PC-9 (cell line): ENCODE measurements at regions of chr11 and their contacts with region 1.

Region 1: GRCh38 chr11:126115816-126116331 is 53.2 kb upstream of the CDON start:
- DNase-seq: peak; percentile 43 to 75
- H3K4me3 ChIP-seq: no peak overlapping the region
- H3K27ac ChIP-seq: no peak overlapping the region
- H3K4me1 ChIP-seq: peaks cover 34% of the 10 kb centered on the region
- H3K27me3 ChIP-seq: no peaks in the 10 kb centered on the region
- CTCF ChIP-seq: no peak; the same call in 1 of the 2 replicates

Region 2: DNA sequence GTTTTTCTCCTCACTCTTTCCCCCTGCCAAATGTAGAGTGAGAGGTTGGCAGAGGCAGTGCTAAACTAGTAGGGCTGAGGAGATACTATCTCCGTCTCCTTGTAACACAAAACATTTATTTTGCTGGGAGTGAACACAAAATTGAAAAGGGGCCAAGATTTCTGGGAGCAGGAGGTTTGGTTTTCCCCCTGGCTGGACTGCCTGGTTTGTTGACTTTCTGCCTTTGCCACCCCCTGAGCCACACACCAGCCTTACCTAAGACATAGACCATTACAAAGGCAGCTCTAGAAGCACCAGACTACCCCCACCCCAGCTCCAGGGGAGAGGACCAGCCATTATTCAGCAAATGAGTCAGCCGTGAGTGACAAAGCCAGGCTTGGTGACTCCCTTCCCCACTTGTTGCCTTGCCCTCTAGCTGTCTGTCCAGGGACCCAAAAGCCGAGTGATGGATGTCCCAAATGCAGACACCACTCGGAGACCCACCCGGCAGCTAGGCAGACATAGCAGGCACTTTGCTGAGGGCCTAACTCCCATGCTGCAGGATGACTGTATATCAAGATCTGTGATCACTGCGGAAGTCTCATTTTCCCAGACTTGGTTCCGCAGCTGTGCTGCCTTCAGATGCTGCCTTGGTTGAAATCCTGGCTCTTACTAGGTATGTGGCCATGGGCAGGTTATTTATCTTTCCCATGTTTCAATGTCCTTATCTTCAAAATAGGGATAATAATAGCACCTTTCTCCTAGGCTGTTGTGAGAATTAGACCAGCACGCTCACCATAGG is 35.5 kb before region 1 on chr11:
- CTCF ChIA-PET with region 1: no interaction called
- POLR2A ChIA-PET with region 1: no interaction called
- intact Hi-C with region 1: loop called (anchors 5 kb)
- DNase-seq: peak; percentile 77 to 82
- H3K4me3 ChIP-seq: peak overlapping the region; percentile 27; the same call in 1 of the 2 replicates
- H3K27ac ChIP-seq: peak overlapping the region; percentile 78
- H3K4me1 ChIP-seq: peaks cover 32% of the 10 kb centered on the region
- H3K27me3 ChIP-seq: no peaks in the 10 kb centered on the region
- CTCF ChIP-seq: no peak

Region 3: GRCh38 chr11:126164781-126165180 is 48.9 kb after region 1 on chr11:
- CTCF ChIA-PET with region 1: interaction called, 4 read pairs
- POLR2A ChIA-PET with region 1: interaction called, 13 read pairs
- intact Hi-C with region 1: no loop called
- DNase-seq: no peak
- H3K4me3 ChIP-seq: no peak overlapping the region
- H3K27ac ChIP-seq: no peak overlapping the region
- H3K4me1 ChIP-seq: no peaks in the 10 kb centered on the region
- H3K27me3 ChIP-seq: no peaks in the 10 kb centered on the region
- CTCF ChIP-seq: no peak